Caco-2 (cell line): ENCODE measurements at regions of chr1 and their contacts with region 1.

Region 1: GRCh38 chr1:228837817-228838716 is 102.8 kb downstream of the RHOU start:
- DNase-seq: peak; percentile 87 to 92
- H3K4me3 ChIP-seq: peak overlapping the region; percentile 5
- H3K4me3 Mint-ChIP-seq: peak overlapping the region; percentile 63
- H3K27ac Mint-ChIP-seq: peak overlapping the region; percentile 93
- H3K4me1 ChIP-seq: peaks cover 62% of the 10 kb centered on the region
- H3K4me1 Mint-ChIP-seq: peaks cover 57% of the 10 kb centered on the region
- H3K27me3 ChIP-seq: no peaks in the 10 kb centered on the region
- H3K27me3 Mint-ChIP-seq: no peaks in the 10 kb centered on the region
- CTCF ChIP-seq: no peak

Region 2: DNA sequence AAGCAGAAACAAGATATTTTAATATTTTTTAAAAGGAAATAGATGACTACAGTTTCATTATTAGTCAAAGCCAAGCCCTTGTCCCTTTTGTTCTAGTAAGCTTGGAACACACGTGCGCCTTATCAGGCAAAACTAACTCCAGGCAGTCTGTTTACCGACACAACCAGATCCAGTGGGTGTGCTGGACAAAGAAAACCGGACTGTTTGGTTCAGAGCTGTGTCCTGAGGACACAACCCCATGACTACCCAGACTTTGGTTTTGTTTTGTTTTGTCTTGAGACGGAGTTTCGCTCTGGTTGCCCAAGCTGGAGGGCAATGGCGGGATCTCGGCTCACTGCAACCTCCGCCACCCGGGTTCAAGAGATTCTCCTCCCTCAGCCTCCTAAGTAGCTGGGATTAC is 116.7 kb before region 1 on chr1:
- CTCF ChIA-PET with region 1: no interaction called
- POLR2A ChIA-PET with region 1: no interaction called
- intact Hi-C with region 1: no loop called
- DNase-seq: peak; percentile 61 to 65
- H3K4me3 ChIP-seq: no peak overlapping the region
- H3K4me3 Mint-ChIP-seq: no peak overlapping the region
- H3K27ac Mint-ChIP-seq: no peak overlapping the region
- H3K4me1 ChIP-seq: no peaks in the 10 kb centered on the region
- H3K4me1 Mint-ChIP-seq: peaks cover 7% of the 10 kb centered on the region
- H3K27me3 ChIP-seq: no peaks in the 10 kb centered on the region
- H3K27me3 Mint-ChIP-seq: no peaks in the 10 kb centered on the region
- CTCF ChIP-seq: no peak

Region 3: DNA sequence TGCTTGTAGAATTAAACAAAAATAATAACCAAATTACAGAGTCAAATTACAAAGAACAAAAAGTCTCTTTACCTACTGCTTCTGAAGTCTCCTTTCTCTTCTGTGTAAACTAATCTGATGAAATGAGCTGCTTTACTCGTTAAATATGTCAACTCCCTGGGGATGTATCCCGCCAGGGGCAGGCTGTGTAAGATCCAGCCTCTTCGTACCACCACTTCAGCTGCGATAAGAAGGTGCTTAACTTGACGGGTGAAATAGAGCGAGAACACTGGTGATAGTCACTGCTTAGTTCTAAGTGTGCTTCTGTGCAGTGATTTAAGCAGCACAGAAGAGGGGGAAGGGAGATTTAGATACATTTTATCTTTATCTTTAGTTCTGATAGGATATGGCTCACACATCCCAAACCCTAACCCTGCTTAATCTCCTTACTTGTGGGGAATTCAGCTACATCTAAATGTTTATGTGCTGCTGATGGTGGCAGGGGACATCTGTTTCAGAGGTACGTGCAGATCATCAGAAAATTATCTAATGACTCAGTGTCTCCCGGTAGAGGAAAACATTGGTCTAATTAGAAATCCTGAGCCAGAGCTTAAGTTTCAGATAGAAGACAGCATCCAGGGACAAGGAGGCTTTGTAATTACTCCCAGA is 56.8 kb before region 1 on chr1:
- CTCF ChIA-PET with region 1: interaction called, 3 read pairs
- POLR2A ChIA-PET with region 1: interaction called, 13 read pairs
- intact Hi-C with region 1: loop called (anchors 1 kb)
- DNase-seq: no peak
- H3K4me3 ChIP-seq: no peak overlapping the region
- H3K4me3 Mint-ChIP-seq: no peak overlapping the region
- H3K27ac Mint-ChIP-seq: no peak overlapping the region
- H3K4me1 ChIP-seq: peaks cover 40% of the 10 kb centered on the region
- H3K4me1 Mint-ChIP-seq: peaks cover 16% of the 10 kb centered on the region
- H3K27me3 ChIP-seq: no peaks in the 10 kb centered on the region
- H3K27me3 Mint-ChIP-seq: no peaks in the 10 kb centered on the region
- CTCF ChIP-seq: no peak

Region 4: DNA sequence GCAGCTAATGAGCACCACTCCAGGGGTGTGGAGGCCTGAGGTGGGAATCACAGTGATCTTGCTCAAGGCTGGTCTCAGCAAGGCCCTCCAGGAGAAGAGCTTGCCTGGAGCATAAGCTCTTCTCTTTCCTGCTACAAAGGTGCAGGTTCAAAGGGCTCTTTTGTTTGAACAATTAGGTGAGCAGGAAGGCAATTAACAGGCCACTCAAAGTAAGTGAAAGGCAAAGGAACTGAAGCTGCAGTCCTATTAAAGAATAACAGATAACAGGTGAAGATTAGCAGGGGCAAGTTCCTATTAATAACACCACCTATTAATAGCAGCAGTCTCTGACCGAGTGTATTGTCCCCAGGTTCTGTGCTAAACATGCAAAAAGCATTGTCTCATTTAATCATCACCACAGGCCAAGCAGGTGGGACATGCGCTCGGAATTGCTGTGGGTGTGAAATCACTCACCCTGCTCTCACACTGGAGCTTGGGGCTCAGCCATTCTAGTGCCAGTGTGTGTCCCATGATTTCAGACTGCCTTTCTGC is 11.0 kb after region 1 on chr1:
- CTCF ChIA-PET with region 1: interaction called, 6 read pairs
- POLR2A ChIA-PET with region 1: interaction called, 24 read pairs
- intact Hi-C with region 1: no loop called
- DNase-seq: no peak
- H3K4me3 ChIP-seq: no peak overlapping the region
- H3K4me3 Mint-ChIP-seq: no peak overlapping the region
- H3K27ac Mint-ChIP-seq: peak overlapping the region; percentile 56
- H3K4me1 ChIP-seq: peaks cover 46% of the 10 kb centered on the region
- H3K4me1 Mint-ChIP-seq: peaks cover 50% of the 10 kb centered on the region
- H3K27me3 ChIP-seq: no peaks in the 10 kb centered on the region
- H3K27me3 Mint-ChIP-seq: no peaks in the 10 kb centered on the region
- CTCF ChIP-seq: no peak

Region 5: GRCh38 chr1:228860911-228861831 is 23.1 kb after region 1 on chr1:
- CTCF ChIA-PET with region 1: interaction called, 4 read pairs
- POLR2A ChIA-PET with region 1: interaction called, 15 read pairs
- intact Hi-C with region 1: loop called (anchors 1 kb)
- DNase-seq: peak; percentile 82 to 88
- H3K4me3 ChIP-seq: no peak overlapping the region
- H3K4me3 Mint-ChIP-seq: peak overlapping the region; percentile 64
- H3K27ac Mint-ChIP-seq: peak overlapping the region; percentile 88
- H3K4me1 ChIP-seq: peaks cover 60% of the 10 kb centered on the region
- H3K4me1 Mint-ChIP-seq: peaks cover 55% of the 10 kb centered on the region
- H3K27me3 ChIP-seq: no peaks in the 10 kb centered on the region
- H3K27me3 Mint-ChIP-seq: no peaks in the 10 kb centered on the region
- CTCF ChIP-seq: no peak

Region 6: GRCh38 chr1:228958121-228958520 is 120.1 kb after region 1 on chr1:
- CTCF ChIA-PET with region 1: no interaction called
- POLR2A ChIA-PET with region 1: no interaction called
- intact Hi-C with region 1: loop called (anchors 2 kb)
- DNase-seq: no peak
- H3K4me3 ChIP-seq: no peak overlapping the region
- H3K4me3 Mint-ChIP-seq: no peak overlapping the region
- H3K27ac Mint-ChIP-seq: peak overlapping the region; percentile 76
- H3K4me1 ChIP-seq: peaks cover 30% of the 10 kb centered on the region
- H3K4me1 Mint-ChIP-seq: peaks cover 18% of the 10 kb centered on the region
- H3K27me3 ChIP-seq: no peaks in the 10 kb centered on the region
- H3K27me3 Mint-ChIP-seq: no peaks in the 10 kb centered on the region
- CTCF ChIP-seq: no peak

Region 7: DNA sequence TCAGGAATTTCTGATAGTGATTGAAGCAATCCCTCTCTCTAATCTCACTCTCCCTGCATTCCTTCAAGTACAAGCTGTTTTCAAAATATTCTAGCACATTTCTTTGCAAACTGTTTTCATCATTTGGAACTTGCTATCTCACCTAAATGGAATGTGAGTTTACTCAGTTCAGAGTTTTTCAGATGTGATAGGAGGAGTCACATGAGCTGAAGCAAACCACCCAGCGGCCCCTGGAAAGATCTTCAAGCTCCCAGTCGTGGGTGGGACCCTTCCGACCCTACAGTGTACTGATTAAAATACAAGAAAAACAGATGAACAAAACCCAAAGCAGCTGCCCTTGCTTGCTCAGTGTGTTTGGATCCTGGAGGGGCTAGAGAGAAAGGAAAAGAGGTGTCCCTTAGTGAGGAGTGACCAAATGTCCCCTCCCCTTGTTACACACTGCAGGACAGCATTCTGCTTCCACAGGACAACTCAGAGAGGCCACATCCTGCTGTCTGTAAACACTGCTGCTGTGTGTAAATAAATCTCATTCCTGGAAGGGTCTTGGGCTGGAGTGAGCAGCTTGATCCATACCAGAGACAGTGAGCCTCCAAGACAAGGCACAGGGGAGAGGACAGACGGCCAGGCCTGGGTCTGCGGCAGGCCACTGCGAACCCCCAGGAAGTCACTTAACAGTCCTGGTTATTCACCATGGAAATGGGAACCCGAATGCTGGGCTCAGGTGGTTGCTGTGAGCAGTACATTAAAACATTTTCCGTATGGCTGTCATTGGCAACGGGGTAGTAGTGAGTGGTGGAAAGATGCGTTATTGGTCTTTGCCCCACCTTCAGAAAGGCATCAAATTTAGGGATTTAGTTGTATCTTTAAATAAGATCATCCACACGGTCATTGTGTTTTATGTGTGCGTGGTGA is 126.4 kb after region 1 on chr1:
- CTCF ChIA-PET with region 1: no interaction called
- POLR2A ChIA-PET with region 1: interaction called, 9 read pairs
- intact Hi-C with region 1: loop called (anchors 1 kb)
- DNase-seq: peak; percentile 69 to 71
- H3K4me3 ChIP-seq: no peak overlapping the region
- H3K4me3 Mint-ChIP-seq: peak overlapping the region; percentile 67
- H3K27ac Mint-ChIP-seq: peak overlapping the region; percentile 99
- H3K4me1 ChIP-seq: peaks cover 25% of the 10 kb centered on the region
- H3K4me1 Mint-ChIP-seq: peaks cover 17% of the 10 kb centered on the region
- H3K27me3 ChIP-seq: no peaks in the 10 kb centered on the region
- H3K27me3 Mint-ChIP-seq: no peaks in the 10 kb centered on the region
- CTCF ChIP-seq: no peak

Region 8: DNA sequence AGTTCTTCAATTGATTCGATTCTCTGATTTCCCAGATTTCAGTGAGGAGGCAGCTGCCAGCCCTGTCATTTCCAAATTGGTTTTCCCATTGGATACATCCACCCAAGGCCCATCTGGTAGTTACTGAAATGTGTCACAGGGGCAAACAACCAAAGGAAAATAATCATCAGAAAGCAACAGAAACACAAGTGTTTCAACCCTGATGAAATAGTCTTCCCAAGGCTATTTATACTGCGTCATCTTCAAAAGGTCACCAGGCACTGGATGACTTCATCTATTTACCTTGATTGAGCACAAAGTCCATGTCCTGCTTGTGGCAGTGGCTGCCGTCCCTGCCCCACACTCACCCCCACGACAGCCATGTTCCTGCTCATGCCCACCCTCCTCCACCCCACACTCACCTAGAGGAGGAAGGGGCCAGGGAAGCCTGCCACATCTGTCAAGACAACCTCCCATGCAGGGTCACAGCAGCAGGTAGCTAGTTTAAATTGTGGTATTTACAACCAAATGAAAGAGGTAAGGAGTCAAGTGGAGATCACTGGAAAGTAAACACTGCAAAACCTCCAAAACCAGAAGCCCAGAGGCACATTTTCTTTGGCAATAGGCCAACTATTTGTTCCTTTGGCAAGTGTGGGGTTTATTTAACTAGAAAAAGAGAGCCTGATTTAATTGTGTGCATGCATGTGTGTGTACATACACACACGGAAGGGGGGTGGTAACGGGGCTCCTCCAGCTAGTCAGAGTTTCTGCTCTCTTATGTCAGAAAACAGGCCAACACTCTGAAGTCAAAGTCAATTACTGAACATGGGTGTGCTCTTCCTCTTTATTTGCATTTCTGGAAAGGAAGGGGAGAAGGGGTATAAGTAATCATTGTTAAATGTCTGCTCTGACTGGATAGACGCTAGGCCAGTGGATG is 383.3 kb after region 1 on chr1:
- CTCF ChIA-PET with region 1: interaction called, 3 read pairs
- POLR2A ChIA-PET with region 1: no interaction called
- intact Hi-C with region 1: loop called (anchors 5 kb)
- DNase-seq: peak; percentile 83 to 89
- H3K4me3 ChIP-seq: no peak overlapping the region
- H3K4me3 Mint-ChIP-seq: no peak overlapping the region
- H3K27ac Mint-ChIP-seq: no peak overlapping the region
- H3K4me1 ChIP-seq: peaks cover 64% of the 10 kb centered on the region
- H3K4me1 Mint-ChIP-seq: peaks cover 15% of the 10 kb centered on the region
- H3K27me3 ChIP-seq: no peaks in the 10 kb centered on the region
- H3K27me3 Mint-ChIP-seq: no peaks in the 10 kb centered on the region
- CTCF ChIP-seq: no peak